ENCODE measurements at regions of chr17 and their contacts with region 1.

Region 1: DNA sequence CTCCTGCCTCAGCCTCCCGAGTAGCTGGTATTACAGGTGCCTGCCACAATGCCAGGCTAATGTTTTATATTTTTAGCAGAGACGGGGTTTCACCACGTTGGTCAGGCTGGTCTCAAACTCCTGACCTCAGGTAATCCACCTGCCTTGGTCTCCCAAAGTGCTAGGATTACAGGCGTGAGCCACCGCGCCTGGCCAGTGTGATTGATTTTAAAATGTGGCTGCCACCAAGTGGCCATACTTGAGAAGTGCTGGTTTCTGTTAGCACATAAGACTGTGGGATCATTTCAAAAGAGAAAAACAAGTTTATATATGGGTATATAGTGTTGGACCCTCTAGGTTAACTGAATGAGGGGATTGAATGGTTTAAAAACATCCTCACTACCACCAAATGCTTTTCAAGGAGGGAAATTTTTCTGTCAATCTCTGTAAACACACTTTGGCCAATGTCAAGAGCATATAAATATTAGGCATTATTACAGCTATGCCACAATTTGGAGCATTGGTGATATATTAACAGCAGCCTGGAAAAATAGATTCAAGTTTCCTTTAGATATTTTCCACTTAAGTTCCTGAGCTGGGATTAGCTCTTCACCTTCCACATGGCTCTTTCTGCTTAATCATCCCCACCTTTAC is 13.5 kb upstream of the DHRS13 start:
- DNase-seq: peak in 1 of 3 donors; percentile 73
- ATAC-seq: peak; percentile 69
- H3K4me3 ChIP-seq: no peak overlapping the region
- H3K4me1 ChIP-seq: peaks cover 12% of the 10 kb centered on the region
- CTCF ChIP-seq: no peak

Region 2: DNA sequence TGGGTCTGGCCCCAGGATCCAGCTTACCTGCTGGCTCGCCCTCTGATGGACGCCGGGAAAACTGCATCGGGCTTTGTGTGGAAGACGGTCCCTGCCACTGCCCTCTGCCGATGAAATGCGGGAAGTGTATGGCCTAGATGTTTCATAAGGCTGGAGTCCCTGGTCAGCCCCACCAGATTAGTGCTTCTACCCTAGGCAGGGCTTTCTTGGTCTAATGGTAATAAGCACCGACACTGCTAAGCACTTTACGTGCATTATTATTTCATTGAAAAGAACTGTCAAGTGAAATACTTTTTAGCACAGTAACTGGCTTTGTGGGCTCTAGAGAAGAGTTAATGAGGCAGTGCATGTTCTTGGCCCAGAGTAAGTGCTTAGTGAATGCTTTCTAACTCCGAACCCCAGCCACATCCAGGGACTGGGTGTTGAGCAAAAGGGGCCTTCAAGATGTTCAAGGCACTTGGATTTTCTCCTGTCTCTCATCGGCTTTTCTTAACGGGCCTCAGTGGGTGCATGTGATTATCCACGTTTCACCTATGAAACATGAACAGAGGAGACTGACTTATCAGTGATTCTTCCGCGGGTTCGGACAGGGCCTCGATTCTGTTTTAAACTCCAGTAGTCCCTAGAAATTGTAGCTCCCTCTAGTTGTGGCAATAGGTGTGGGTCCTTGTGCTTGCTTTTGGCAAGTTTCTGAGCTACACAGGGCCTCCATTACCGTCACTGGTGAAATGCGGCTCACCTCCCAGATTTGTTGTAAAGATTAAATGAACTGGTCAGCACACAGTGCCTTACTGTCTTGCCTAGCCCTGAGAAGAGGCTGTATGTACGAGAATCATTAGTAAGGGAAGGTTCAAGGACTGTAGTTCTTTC is 166.0 kb before region 1 on chr17:
- intact Hi-C with region 1: loop called in 1 of 2 experiments (anchors 10 kb)
- DNase-seq: peak; percentile 93 to 99 (median 96)
- ATAC-seq: peak; percentile 71
- H3K4me3 ChIP-seq: no peak overlapping the region
- H3K4me1 ChIP-seq: peaks cover 34% of the 10 kb centered on the region
- CTCF ChIP-seq: peak; percentile 99